SK-N-SH (cell line): ENCODE measurements at regions of chr5 and their contacts with region 1.

Region 1: DNA sequence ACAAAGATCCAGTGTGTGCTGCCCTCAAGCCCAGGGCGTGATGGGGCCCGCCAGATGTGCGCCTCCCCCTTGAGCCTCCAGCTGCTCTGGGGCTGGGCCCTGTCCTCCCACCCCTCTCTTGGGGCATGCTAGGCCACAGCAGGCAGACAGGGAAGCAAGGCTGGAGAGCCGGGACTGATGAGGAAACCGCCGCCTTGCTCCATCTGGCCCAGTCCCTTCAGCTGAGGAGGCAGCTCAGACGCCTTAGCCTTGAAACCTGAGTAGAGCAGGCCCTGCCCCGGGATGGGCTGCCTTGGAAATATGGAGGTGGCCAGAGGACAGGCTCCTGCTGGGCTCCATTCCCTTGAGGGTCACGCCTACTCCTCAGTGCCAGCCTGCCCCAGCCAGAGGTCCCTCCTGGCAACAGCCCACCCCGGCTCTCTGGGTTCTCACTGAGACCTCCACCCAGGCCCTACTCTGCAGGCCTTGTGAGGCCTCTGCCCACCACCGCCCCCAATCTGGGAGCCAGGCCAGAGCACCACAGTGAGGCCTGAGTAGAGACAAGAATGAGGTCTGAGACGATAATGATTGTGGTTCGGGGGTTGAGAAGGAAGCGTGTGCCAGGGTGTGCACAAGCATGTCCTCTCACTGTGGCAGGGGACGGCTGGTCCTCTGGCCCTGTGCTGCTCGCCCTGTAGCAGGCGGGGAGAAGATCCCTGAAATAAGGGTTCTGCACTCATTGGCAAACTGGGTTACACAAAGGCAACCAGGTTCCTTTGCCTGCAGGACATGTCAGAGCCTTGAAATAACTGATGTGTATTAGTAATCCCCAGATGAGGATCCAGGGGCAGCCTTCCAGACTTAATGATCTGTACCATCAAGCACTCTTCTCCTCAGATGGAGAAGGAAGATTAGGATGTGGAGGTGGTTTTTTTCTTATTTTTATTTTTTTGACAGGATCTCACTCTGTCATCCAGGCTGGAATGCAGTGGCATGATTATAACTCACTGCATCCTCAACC is 30.9 kb downstream of the CXXC5 start:
- DNase-seq: peak; percentile 56
- H3K4me3 ChIP-seq: no peak overlapping the region
- H3K27ac ChIP-seq: peak overlapping the region; percentile 54 to 99; a peak in 3 of 4 replicates
- H3K4me1 ChIP-seq: peaks cover 27 to 50% of the 10 kb centered on the region in 2 experiments; a peak in 3 of 4 replicates
- H3K27me3 ChIP-seq: no peaks in the 10 kb centered on the region
- CTCF ChIP-seq: no peak
- EP300 ChIP-seq: no peak
- RAD21 ChIP-seq: no peak

Region 2: DNA sequence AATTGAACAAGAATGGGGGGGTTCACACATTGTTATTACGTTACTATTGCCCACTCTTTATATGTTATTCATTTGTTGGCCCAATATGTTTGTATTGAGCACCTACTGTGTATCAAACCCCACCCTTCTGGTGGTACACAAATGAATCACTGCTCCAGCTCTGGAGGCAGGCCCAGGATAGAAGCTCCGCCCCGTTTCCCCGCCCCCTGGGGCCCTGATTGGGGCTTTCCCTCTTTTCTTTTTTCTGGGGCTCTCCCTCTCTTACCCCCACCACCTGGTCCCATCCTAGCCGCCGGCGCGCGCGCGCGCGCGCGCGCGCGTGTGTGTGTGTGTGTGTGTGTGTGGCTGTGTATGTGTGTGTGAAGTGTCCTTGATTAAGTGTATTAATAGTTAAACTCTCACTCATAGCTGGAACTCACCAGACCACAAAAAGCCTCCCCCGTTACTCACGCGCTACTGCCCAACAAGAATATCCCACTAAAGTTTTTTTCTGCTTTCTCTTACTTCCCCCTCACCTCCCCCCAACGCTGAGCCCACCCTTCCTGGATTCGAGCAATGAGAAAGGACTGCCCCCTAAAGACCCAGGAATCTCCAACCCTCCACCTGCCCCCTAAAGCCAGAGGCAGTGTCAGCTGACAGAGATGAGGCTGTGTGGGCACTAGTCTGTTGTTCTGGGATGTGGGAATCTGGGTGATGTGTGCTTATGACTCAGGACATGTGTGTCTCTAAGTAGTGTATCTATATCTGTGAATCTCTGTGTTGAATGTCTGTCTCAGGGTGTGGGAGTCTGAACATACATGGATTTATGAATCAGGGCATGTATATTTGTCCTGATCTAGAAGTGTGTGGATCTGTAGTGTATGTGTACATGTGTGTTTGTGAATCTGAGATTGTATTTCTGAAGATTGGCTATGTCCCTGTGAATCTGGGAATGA is 26.9 kb before region 1 on chr5:
- CTCF ChIA-PET with region 1: interaction called, 7 read pairs
- POLR2A ChIA-PET with region 1: interaction called, 33 read pairs
- DNase-seq: peak; percentile 89
- H3K4me3 ChIP-seq: peak overlapping the region; percentile 19 to 91; a peak in 3 of 4 replicates
- H3K27ac ChIP-seq: peak overlapping the region; percentile 78 to 96
- H3K4me1 ChIP-seq: peaks cover 54 to 66% of the 10 kb centered on the region in 2 experiments
- H3K27me3 ChIP-seq: no peaks in the 10 kb centered on the region
- CTCF ChIP-seq: no peak
- EP300 ChIP-seq: 0 out of 4 replicates have a peak, but pooled peaks of 1 of the 2 experiments have one; percentile 10
- RAD21 ChIP-seq: no peak

Region 3: DNA sequence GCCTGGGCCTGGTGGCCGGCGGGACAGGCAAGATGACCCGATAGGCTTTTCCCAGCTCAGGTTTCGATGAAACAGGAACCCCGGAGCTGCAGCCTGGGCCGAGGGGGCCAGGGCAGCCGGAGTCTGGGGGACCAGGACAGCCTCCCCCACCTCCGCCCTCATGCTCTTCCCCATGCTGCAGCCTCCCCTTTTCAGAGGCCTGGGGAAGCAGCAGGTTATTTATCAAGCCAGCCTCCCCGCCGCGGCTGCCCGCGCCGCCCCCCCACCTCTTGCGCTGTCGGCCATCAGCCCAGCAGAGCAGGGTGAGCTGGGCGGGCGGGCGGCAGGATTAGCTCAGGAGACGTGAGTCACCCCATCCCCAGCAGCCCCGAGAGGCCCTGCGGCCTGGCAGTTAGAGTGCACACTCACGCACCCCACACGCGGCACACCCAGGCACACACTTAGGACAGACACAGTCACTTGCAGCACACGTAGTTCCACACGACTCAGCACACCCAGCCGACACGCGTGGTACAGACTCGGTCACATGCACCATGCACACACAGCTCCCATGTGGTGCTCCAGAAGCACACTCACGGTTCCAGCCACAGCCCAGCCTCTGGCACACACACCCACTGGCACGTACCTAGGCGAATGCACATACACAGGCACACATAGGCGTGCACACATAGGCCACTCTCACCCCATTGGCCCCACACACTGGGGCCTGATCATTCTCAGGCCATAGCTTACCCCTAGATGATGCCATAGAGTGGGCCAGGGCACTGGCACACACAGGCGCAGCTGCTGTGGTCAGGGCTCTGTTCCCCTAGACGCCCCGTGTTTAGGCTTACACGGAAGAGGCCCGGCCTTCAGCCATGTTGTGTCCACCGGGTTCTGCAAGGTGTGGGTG is 17.9 kb before region 1 on chr5:
- CTCF ChIA-PET with region 1: interaction called, 21 read pairs
- POLR2A ChIA-PET with region 1: interaction called, 34 read pairs
- DNase-seq: peak; percentile 84
- H3K4me3 ChIP-seq: no peak overlapping the region
- H3K27ac ChIP-seq: peak overlapping the region; percentile 96 to 99
- H3K4me1 ChIP-seq: peaks cover 76 to 96% of the 10 kb centered on the region in 2 experiments
- H3K27me3 ChIP-seq: no peaks in the 10 kb centered on the region
- CTCF ChIP-seq: no peak
- EP300 ChIP-seq: peak in 1 of 2 experiments; percentile 69; a peak in 2 of 4 replicates
- RAD21 ChIP-seq: no peak

Region 4: DNA sequence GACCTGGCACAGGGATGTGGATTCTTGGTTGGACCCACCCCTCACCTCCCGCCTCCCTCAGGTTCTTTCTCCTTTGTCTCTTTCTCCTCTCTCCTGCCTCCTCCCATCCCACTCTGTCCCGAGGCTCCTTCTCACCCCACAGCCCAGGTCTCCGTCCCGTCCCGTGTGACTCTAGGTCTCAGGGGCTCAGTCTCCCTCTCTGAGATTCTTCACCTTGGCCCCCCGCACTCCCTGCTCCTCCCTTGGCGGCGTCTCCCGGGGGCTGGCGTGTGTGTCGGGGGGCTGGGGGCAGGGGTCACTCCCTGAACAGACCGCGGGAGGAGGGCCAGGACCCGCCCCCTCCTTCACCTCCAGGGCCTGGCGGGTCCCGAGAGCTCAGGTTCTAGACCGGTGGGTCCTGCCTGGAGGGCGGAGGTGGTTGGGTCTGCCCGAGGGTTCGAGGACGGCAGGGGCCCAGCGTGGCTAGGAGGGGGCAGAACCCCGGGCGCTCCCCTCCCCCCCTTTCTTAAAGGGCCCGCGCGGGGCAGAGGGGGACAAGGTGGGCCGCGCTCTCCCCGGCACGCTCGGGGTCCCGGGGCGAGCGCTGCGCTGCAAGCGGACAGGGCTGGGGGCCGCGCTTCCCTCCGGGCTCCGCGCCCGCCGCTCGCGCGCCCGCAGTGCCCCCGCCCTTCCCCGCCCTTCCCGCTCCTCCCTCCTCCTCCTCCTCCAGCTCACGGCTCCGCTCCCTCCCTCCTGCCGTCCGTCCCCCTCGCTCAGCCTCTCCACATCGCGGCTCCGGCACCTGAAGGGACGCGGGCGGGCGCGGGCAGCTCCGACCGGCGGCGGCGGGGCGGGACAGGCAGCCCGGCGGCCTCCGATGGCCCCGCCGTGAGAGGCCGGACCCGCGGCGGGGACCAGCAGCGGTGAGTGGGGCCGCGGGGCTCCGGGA is 116.3 kb after region 1 on chr5 and contains the start of gene PSD2:
- CTCF ChIA-PET with region 1: no interaction called
- POLR2A ChIA-PET with region 1: no interaction called
- DNase-seq: peak; percentile 89
- H3K4me3 ChIP-seq: peak within 1 kb of the TSS in 1 of 2 experiments; percentile 44; a peak in 3 of 4 replicates
- H3K27ac ChIP-seq: no peak within 1 kb of the TSS
- H3K4me1 ChIP-seq: peaks cover 0 to 4% of the 10 kb centered on the region in 2 experiments; a peak in 1 of 4 replicates
- H3K27me3 ChIP-seq: peaks cover 60% of the 10 kb centered on the region
- CTCF ChIP-seq: no peak
- EP300 ChIP-seq: no peak
- RAD21 ChIP-seq: no peak
- polyA plus RNA-seq, gene PSD2: 0.15 TPM in 2 replicates